HEK293 (cell line): ENCODE measurements at regions of chr14 and their contacts with region 1.

Region 1: GRCh38 chr14:22900081-22900799 is 17.2 kb downstream of the REM2 start:
- H3K4me3 ChIP-seq: no peak overlapping the region
- H3K27ac ChIP-seq: no peak overlapping the region
- H3K4me1 ChIP-seq: no peaks in the 10 kb centered on the region
- CTCF ChIP-seq: peak; percentile 45; the same call in 1 of the 2 replicates

Region 2: GRCh38 chr14:22726012-22726411 is 174.2 kb before region 1 on chr14:
- CTCF ChIA-PET with region 1: no interaction called
- POLR2A ChIA-PET with region 1: no interaction called
- H3K4me3 ChIP-seq: no peak overlapping the region
- H3K27ac ChIP-seq: no peak overlapping the region
- H3K4me1 ChIP-seq: no peaks in the 10 kb centered on the region
- CTCF ChIP-seq: no peak

Region 3: GRCh38 chr14:22822571-22823098 is 77.6 kb before region 1 on chr14:
- CTCF ChIA-PET with region 1: interaction called, 17 read pairs
- POLR2A ChIA-PET with region 1: interaction called, 4 read pairs
- H3K4me3 ChIP-seq: peak overlapping the region; percentile 15
- H3K27ac ChIP-seq: no peak overlapping the region
- H3K4me1 ChIP-seq: peaks cover 2% of the 10 kb centered on the region; the same call in 1 of the 2 replicates
- CTCF ChIP-seq: peak; percentile 68

Region 4: DNA sequence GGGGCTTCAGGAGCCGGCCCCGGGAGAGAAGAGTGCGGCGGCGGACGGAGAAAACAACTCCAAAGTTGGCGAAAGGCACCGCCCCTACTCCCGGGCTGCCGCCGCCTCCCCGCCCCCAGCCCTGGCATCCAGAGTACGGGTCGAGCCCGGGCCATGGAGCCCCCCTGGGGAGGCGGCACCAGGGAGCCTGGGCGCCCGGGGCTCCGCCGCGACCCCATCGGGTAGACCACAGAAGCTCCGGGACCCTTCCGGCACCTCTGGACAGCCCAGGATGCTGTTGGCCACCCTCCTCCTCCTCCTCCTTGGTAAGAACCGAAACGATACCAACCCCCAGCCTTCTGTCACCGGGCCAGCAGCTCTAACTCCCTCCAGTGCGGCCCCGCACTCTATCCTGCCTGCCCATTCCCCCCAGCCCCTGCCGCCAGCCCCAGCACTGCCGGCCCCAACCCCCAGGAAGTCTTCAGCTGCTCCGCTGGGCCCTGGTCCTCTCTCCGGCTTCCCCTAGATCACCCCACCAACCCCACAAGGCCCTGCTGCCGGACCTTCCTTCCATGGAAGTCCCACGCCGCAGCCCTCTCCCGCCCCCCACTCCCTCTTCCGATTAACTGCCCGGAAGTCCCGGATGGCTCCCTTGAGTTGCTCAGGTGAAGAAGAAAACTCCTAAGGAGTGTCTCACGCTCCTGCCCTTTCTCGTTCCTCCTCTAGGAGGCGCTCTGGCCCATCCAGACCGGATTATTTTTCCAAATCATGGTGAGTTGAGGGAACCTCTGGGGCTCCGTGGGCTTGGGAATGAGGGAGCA is 28.0 kb before region 1 on chr14:
- CTCF ChIA-PET with region 1: interaction called, 37 read pairs
- POLR2A ChIA-PET with region 1: interaction called, 3 read pairs
- H3K4me3 ChIP-seq: peak overlapping the region; percentile 74
- H3K27ac ChIP-seq: peak overlapping the region; percentile 87
- H3K4me1 ChIP-seq: peaks cover 9% of the 10 kb centered on the region
- CTCF ChIP-seq: peak; percentile 86

Region 5: DNA sequence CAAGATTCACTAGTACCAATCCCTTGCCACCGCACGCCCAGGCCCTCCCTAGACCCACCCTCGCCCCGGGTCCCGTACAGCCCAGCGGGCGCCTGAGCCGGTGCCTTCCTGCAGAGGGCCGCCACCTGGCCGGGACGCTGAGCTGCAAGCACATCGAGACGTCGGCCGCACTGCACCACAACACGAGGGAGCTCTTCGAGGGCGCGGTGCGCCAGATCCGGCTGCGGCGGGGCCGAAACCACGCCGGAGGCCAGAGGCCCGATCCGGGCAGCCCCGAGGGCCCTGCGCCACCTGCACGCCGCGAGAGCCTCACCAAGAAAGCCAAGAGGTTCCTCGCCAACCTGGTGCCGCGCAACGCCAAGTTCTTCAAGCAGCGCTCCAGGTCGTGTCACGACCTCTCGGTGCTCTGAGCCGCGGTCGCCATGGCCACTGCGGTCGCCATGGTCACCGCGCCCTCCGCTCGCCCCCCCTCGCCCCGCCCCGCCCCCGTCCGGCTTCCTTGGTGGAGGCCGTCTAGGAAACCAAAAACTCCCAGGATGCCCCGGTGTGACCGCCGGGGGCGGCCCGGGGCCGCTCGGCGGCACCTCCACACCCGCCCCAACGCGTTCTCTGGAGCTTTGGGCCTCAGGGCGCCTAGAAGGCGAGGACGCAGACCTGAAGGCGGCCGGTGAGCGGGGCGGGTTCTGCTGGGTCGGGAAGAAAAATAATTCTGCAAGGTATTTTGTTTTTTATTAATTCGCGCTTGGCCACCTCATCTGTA is 13.6 kb before region 1 on chr14:
- CTCF ChIA-PET with region 1: interaction called, 28 read pairs
- POLR2A ChIA-PET with region 1: interaction called, 4 read pairs
- H3K4me3 ChIP-seq: peak overlapping the region; percentile 55
- H3K27ac ChIP-seq: peak overlapping the region; percentile 78
- H3K4me1 ChIP-seq: peaks cover 6% of the 10 kb centered on the region
- CTCF ChIP-seq: peak; percentile 69; the same call in 1 of the 2 replicates

Region 6: GRCh38 chr14:22918804-22919600 is 18.8 kb after region 1 on chr14 and contains the start of gene RBM23:
- CTCF ChIA-PET with region 1: interaction called, 41 read pairs
- POLR2A ChIA-PET with region 1: interaction called, 5 read pairs
- H3K4me3 ChIP-seq: peak within 1 kb of the TSS; percentile 87
- H3K27ac ChIP-seq: peak within 1 kb of the TSS; percentile 77
- H3K4me1 ChIP-seq: peaks cover 5% of the 10 kb centered on the region; the same call in 1 of the 2 replicates
- CTCF ChIP-seq: no peak

Region 7: GRCh38 chr14:22939684-22940083 is 39.4 kb after region 1 on chr14:
- CTCF ChIA-PET with region 1: no interaction called
- POLR2A ChIA-PET with region 1: no interaction called
- H3K4me3 ChIP-seq: no peak overlapping the region
- H3K27ac ChIP-seq: no peak overlapping the region
- H3K4me1 ChIP-seq: no peaks in the 10 kb centered on the region
- CTCF ChIP-seq: no peak